Dendritic cell treated with granulocyte-macrophage colony-stimulating factor and Interleukin-4, amounts not matched to agents 40 ng/mL and 50 ng/mL, for 4 days (primary cell): ENCODE measurements at regions of chr3 and their contacts with region 1.

Region 1: GRCh38 chr3:136181741-136182140 is 14.4 kb downstream of the MSL2 start:
- H3K4me3 Mint-ChIP-seq: no peak overlapping the region
- H3K27ac Mint-ChIP-seq: no peak overlapping the region
- H3K4me1 Mint-ChIP-seq: peaks cover 49% of the 10 kb centered on the region
- H3K27me3 Mint-ChIP-seq: no peaks in the 10 kb centered on the region

Region 2: GRCh38 chr3:136171097-136171542 is 10.6 kb before region 1 on chr3:
- intact Hi-C with region 1: loop called (anchors 2 kb)
- H3K4me3 Mint-ChIP-seq: no peak overlapping the region
- H3K27ac Mint-ChIP-seq: no peak overlapping the region
- H3K4me1 Mint-ChIP-seq: peaks cover 25% of the 10 kb centered on the region
- H3K27me3 Mint-ChIP-seq: no peaks in the 10 kb centered on the region